ENCODE measurements at regions of chr20 and their contacts with region 1.

Region 1: DNA sequence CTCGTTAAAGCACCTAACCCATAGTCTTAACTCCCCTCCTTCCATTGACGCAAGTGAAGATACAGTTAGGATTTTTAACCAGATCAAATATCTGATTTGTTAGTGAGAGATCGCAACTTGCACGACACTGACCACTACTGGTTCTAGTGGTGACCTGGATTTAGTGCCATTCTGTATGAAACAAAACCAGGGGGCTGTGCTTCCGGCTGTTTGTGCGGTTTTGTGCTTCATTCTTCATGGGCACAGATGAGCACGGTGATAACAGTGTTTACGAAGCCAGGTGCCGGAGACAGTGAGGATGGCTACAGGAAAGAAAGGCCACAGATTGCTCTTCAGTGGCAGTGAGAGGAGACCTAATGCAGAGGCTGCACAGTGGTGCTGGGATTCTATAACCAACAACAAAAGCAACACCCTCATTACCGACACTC is 75.5 kb downstream of the NOL4L start:
- DNase-seq: peak; percentile 75
- H3K4me3 ChIP-seq: no peak overlapping the region
- H3K27ac ChIP-seq: peak overlapping the region in 1 of 2 experiments; percentile 75; a peak in 2 of 4 replicates
- H3K4me1 ChIP-seq: peaks cover 0 to 44% of the 10 kb centered on the region in 2 experiments; a peak in 1 of 4 replicates
- H3K27me3 ChIP-seq: no peaks in the 10 kb centered on the region
- CTCF ChIP-seq: peak; percentile 60
- EP300 ChIP-seq: peak in 1 of 2 experiments; percentile 51; a peak in 2 of 4 replicates
- RAD21 ChIP-seq: peak; percentile 69

Region 2: GRCh38 chr20:32484958-32485769 is 24.5 kb before region 1 on chr20:
- CTCF ChIA-PET with region 1: interaction called, 28 read pairs
- POLR2A ChIA-PET with region 1: interaction called, 5 read pairs
- DNase-seq: peak; percentile 61
- H3K4me3 ChIP-seq: peak overlapping the region; percentile 53 to 61
- H3K27ac ChIP-seq: peak overlapping the region; percentile 87 to 100
- H3K4me1 ChIP-seq: peaks cover 0 to 33% of the 10 kb centered on the region in 2 experiments; a peak in 2 of 4 replicates
- H3K27me3 ChIP-seq: no peaks in the 10 kb centered on the region
- CTCF ChIP-seq: peak; percentile 79
- EP300 ChIP-seq: no peak
- RAD21 ChIP-seq: peak; percentile 72

Region 3: DNA sequence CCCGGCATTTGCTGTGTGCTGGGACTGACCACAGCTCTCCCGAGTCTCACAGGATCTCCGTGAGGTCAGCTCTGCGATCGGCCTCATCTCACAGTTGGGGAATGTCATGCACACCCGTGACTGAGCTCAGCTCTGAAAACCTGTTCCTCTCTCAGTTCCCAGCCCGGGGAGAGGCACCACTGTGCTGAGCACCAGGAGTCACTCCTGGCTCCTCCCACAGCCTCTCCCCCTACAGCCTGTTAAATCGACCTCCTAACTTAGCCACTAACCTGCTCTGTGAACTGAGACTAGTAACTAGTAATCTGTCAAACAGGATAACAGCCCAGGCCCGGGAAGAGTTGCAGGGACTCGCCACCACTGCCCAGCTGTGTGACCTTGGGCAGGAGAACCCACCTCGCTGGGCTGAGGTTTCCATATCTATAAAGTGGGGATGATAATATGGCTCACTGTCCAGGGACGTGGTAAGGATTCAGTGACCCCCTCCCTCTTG is 95.6 kb after region 1 on chr20:
- CTCF ChIA-PET with region 1: no interaction called
- POLR2A ChIA-PET with region 1: no interaction called
- DNase-seq: no peak
- H3K4me3 ChIP-seq: no peak overlapping the region
- H3K27ac ChIP-seq: no peak overlapping the region
- H3K4me1 ChIP-seq: peaks cover 0 to 10% of the 10 kb centered on the region in 2 experiments; a peak in 1 of 4 replicates
- H3K27me3 ChIP-seq: peaks cover 15% of the 10 kb centered on the region; the same call in 1 of the 2 replicates
- CTCF ChIP-seq: no peak
- EP300 ChIP-seq: no peak
- RAD21 ChIP-seq: no peak

Measured in SK-N-SH (cell line).